Heart right ventricle (tissue), 16 donors: ENCODE measurements at regions of chr4 and their contacts with region 1.

Region 1: GRCh38 chr4:156788782-156789181 is 182.8 kb downstream of the PDGFC start:
- DNase-seq: no peak
- ATAC-seq: no peak
- H3K4me3 ChIP-seq: no peak overlapping the region
- H3K27ac ChIP-seq: no peak overlapping the region
- H3K4me1 ChIP-seq: peaks cover 0 to 19% (median 4%) of the 10 kb centered on the region in 9 donors
- H3K27me3 ChIP-seq: no peaks in the 10 kb centered on the region
- CTCF ChIP-seq: no peak

Region 2: GRCh38 chr4:156838761-156839160 is 50.0 kb after region 1 on chr4:
- intact Hi-C with region 1: no loop called
- DNase-seq: no peak
- ATAC-seq: no peak
- H3K4me3 ChIP-seq: no peak overlapping the region
- H3K27ac ChIP-seq: no peak overlapping the region
- H3K4me1 ChIP-seq: peaks cover 0 to 10% (median 0%) of the 10 kb centered on the region in 9 donors
- H3K27me3 ChIP-seq: no peaks in the 10 kb centered on the region
- CTCF ChIP-seq: no peak

Region 3: GRCh38 chr4:156962528-156962974 is 173.8 kb after region 1 on chr4:
- intact Hi-C with region 1: loop called in 1 of 10 experiments (anchors 5 kb)
- DNase-seq: no peak
- ATAC-seq: peak in 6 of 8 donors; percentile 39 to 71 (median 44)
- H3K4me3 ChIP-seq: no peak overlapping the region
- H3K27ac ChIP-seq: no peak overlapping the region
- H3K4me1 ChIP-seq: peaks cover 0 to 52% (median 17%) of the 10 kb centered on the region in 9 donors
- H3K27me3 ChIP-seq: no peaks in the 10 kb centered on the region
- CTCF ChIP-seq: no peak